ENCODE measurements at regions of chr3 and their contacts with region 1.

Region 1: GRCh38 chr3:116863822-116864589 is 154.4 kb downstream of the TUSC7 start:
- DNase-seq: no peak
- H3K4me3 ChIP-seq: peak overlapping the region in 1 of 2 donors; percentile 2
- H3K27ac ChIP-seq: no peak overlapping the region
- H3K4me1 ChIP-seq: no peaks in the 10 kb centered on the region
- H3K27me3 ChIP-seq: no peaks in the 10 kb centered on the region
- CTCF ChIP-seq: peak in 3 of 4 experiments; percentile 13 to 31 (median 25)
- POLR2A ChIP-seq: no peak

Region 2: DNA sequence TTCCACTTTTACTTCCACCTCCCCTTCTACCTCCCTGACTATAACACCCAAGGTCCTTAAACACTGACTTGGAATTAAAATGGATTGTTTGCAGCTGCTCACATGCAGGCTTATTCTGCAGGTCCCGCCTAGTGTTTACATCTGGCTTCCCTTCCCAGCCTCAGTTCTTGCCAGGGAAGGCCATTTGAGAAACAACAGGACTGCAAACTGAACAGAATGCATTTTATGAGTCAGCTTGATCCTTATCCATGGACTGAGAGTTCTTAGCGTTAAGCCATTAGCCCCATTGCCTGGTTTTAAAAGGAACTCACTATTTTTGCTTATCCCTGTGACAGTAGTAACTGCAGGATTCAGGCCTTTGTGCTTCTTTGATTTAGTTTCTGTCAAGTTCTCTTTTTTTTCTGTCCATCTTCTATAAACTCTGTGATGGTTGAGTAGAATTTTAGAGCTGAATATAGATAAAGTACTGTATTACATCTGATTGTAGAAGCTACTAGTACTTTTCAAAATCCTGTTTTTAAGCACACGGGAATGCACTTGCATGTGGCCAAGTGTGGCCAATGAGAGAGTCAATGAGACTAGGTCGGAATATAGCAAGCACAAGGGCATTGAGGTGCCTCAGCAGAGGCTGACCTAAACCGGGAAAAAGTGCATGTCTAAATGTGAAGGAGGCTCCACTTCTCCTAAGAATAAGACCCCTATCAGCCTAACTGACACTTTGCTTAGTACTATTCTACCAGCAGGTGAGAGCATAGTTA is 48.0 kb before region 1 on chr3:
- intact Hi-C with region 1: no loop called
- DNase-seq: peak; percentile 10
- H3K4me3 ChIP-seq: no peak overlapping the region
- H3K27ac ChIP-seq: peak overlapping the region in 1 of 2 donors; percentile 1
- H3K4me1 ChIP-seq: no peaks in the 10 kb centered on the region
- H3K27me3 ChIP-seq: no peaks in the 10 kb centered on the region
- CTCF ChIP-seq: no peak
- POLR2A ChIP-seq: no peak

Region 3: GRCh38 chr3:117526470-117527079 is 662.6 kb after region 1 on chr3:
- intact Hi-C with region 1: loop called (anchors 10 kb)
- DNase-seq: peak; percentile 5
- H3K4me3 ChIP-seq: no peak overlapping the region
- H3K27ac ChIP-seq: no peak overlapping the region
- H3K4me1 ChIP-seq: no peaks in the 10 kb centered on the region
- H3K27me3 ChIP-seq: no peaks in the 10 kb centered on the region
- CTCF ChIP-seq: peak; percentile 16 to 66 (median 55)
- POLR2A ChIP-seq: no peak

Region 4: GRCh38 chr3:117722856-117723255 is 858.9 kb after region 1 on chr3:
- intact Hi-C with region 1: loop called (anchors 10 kb)
- DNase-seq: no peak
- H3K4me3 ChIP-seq: no peak overlapping the region
- H3K27ac ChIP-seq: no peak overlapping the region
- H3K4me1 ChIP-seq: no peaks in the 10 kb centered on the region
- H3K27me3 ChIP-seq: no peaks in the 10 kb centered on the region
- CTCF ChIP-seq: no peak
- POLR2A ChIP-seq: no peak

Region 5: GRCh38 chr3:117997201-117998049 is 1133.4 kb after region 1 on chr3:
- intact Hi-C with region 1: loop called (anchors 10 kb)
- DNase-seq: peak; percentile 65
- H3K4me3 ChIP-seq: peak overlapping the region; percentile 37 to 47
- H3K27ac ChIP-seq: peak overlapping the region in 1 of 2 donors; percentile 26
- H3K4me1 ChIP-seq: no peaks in the 10 kb centered on the region
- H3K27me3 ChIP-seq: no peaks in the 10 kb centered on the region
- CTCF ChIP-seq: peak; percentile 43 to 72 (median 62)
- POLR2A ChIP-seq: no peak